Aorta (tissue), 5 donors: ENCODE measurements at regions of chr7 and their contacts with region 1.

Region 1: DNA sequence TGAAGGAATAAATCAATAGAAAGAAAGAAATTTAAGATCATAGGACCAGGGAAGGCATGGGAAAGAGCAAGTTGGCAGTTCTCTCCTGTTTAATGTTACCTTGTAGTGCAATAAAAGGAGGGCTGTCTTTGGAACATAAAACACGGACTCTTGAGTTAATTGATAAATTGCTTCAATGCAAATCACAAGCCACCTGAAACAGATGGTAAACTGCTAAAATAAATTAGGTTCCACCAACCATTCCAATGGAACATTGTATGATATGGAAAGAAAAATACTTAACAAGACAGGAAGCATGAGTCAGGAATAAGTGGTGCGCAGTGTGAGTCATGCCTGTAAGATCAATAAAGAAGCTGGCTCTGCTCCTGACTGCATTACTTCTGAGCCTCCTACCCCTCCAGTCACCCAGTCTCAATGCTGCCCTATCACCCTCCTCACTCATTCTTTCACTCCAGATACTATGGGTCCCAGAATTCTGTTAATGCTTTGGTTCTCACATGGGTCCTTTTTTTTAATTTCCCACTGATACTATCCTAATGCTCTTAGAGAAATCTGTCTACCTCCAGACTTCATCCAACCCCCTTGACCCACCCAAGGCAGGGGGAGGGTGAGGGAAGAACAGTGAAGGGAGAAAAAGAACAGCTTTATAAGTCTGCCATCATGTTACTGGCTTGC is 78.9 kb downstream of the LRRC17 start:
- DNase-seq: peak in 1 of 2 donors; percentile 73
- ATAC-seq: peak; percentile 80
- H3K4me3 ChIP-seq: no peak overlapping the region
- H3K27ac ChIP-seq: peak overlapping the region; percentile 79 to 91
- H3K4me1 ChIP-seq: peaks cover 0 to 15% of the 10 kb centered on the region in 2 donors
- H3K27me3 ChIP-seq: no peaks in the 10 kb centered on the region

Region 2: GRCh38 chr7:102097584-102098161 is 894.0 kb before region 1 on chr7:
- intact Hi-C with region 1: no loop called
- DNase-seq: peak in 1 of 2 donors; percentile 12
- ATAC-seq: no peak
- H3K4me3 ChIP-seq: no peak overlapping the region
- H3K27ac ChIP-seq: no peak overlapping the region
- H3K4me1 ChIP-seq: no peaks in the 10 kb centered on the region
- H3K27me3 ChIP-seq: no peaks in the 10 kb centered on the region

Region 3: GRCh38 chr7:102875700-102876192 is 115.9 kb before region 1 on chr7:
- intact Hi-C with region 1: loop called in 1 of 2 experiments (anchors 5 kb)
- DNase-seq: no peak
- ATAC-seq: peak; percentile 76
- H3K4me3 ChIP-seq: no peak overlapping the region
- H3K27ac ChIP-seq: peak overlapping the region; percentile 9 to 80
- H3K4me1 ChIP-seq: peaks cover 0 to 1% of the 10 kb centered on the region in 2 donors
- H3K27me3 ChIP-seq: no peaks in the 10 kb centered on the region

Region 4: DNA sequence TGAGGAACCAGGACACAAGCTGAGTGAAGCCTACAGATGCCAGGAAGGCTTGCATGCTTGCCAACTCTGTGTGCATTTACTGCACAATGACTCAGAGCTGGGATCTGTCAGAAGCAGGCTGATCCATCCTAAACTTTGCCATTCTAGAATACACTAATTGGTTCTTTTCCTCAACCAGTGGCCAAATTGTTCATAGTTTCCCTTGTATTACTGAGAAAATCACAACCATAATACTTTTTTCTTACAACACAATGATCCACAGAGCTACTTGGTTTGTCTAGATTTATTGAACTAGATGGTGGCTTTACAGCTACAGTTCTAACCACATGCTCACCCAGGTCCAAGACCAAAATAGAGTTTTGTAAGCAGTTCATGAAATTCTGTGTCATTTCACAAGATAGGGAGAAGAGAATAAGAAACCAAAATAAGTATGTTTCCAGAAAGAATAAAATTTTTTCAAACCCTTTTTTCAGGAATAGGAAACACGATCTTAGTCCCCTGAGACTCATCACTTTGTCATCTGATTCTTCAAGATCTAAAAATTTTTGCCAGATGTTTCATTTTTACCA is 99.9 kb before region 1 on chr7:
- intact Hi-C with region 1: loop called in 1 of 2 experiments (anchors 5 kb)
- DNase-seq: peak; percentile 80 to 82
- ATAC-seq: peak; percentile 61
- H3K4me3 ChIP-seq: no peak overlapping the region
- H3K27ac ChIP-seq: no peak overlapping the region
- H3K4me1 ChIP-seq: peaks cover 5 to 11% of the 10 kb centered on the region in 2 donors
- H3K27me3 ChIP-seq: no peaks in the 10 kb centered on the region

Region 5: GRCh38 chr7:102912742-102913141 is 78.9 kb before region 1 on chr7 and contains the start of gene LRRC17:
- intact Hi-C with region 1: loop called in 1 of 2 experiments (anchors 2 kb)
- DNase-seq: no peak
- ATAC-seq: peak; percentile 55
- H3K4me3 ChIP-seq: peak within 1 kb of the TSS; percentile 59 to 83
- H3K27ac ChIP-seq: peak within 1 kb of the TSS; percentile 71 to 77
- H3K4me1 ChIP-seq: peaks cover 6 to 9% of the 10 kb centered on the region in 2 donors
- H3K27me3 ChIP-seq: no peaks in the 10 kb centered on the region
- total RNA-seq, gene LRRC17: 8.1 to 30.5 TPM

Region 6: GRCh38 chr7:103025341-103025740 is 33.7 kb after region 1 on chr7:
- intact Hi-C with region 1: no loop called
- DNase-seq: no peak
- ATAC-seq: no peak
- H3K4me3 ChIP-seq: no peak overlapping the region
- H3K27ac ChIP-seq: no peak overlapping the region
- H3K4me1 ChIP-seq: no peaks in the 10 kb centered on the region
- H3K27me3 ChIP-seq: no peaks in the 10 kb centered on the region